ENCODE measurements at regions of chr20 and their contacts with region 1.

Region 1: GRCh38 chr20:45857114-45857881 is at the starts of genes ACOT8 and ZSWIM3:
- DNase-seq: peak; percentile 99
- H3K4me3 ChIP-seq: peak within 1 kb of the TSS; percentile 32 to 78 (median 66)
- H3K27ac ChIP-seq: peak within 1 kb of the TSS; percentile 51
- H3K4me1 ChIP-seq: peaks cover 12% of the 10 kb centered on the region
- H3K27me3 ChIP-seq: no peaks in the 10 kb centered on the region
- CTCF ChIP-seq: no peak
- POLR2A ChIP-seq: peak; percentile 91
- total RNA-seq, gene ACOT8: 15.5 and 15.8 TPM in 2 replicates
- total RNA-seq, gene ZSWIM3: 4.2 and 4.4 TPM in 2 replicates

Region 2: DNA sequence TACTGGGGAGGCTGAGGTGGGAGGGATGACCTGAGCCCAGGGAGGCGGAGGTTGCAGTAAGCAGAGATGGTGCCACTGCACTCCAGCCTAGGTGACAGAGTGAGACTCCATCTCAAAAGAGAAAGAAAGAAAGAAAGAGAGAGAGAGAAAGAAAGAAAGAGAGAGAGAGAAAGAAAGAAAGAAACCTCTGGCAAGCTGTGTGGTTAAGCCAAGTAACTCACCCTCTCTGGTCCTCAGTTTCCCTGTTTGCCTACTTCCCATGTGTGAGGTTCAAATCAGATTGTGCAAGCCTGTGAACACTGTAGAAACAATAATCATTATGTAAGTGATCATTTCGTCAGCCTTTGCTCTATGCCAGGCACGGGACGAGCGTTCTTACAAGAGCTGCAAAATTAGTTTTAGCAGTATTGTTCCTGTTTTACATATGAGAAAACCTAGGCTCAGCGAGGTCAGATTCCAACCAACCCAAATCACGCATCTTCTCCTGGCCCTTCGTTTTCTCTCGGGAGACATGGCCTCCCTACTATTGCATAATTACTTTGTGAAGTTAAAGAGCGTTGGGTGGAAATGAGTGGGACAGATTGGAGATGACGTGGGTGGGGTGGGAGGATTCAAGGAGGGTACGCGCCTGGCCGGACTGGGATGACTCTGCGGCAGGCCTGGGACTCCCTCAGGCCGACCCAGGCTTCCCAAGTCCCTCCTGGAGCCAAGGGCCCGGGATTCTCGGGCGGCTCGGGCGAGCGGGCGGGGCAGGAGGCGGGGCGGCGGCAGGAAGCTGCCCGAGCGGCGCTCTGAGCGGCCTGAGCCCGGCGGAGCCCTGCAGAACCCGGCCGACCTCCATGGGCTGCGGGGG is 24.0 kb before region 1 on chr20 and contains the start of gene SNX21:
- CTCF ChIA-PET with region 1: interaction called, 3 read pairs
- POLR2A ChIA-PET with region 1: no interaction called
- dilution Hi-C with region 1: no loop called
- intact Hi-C with region 1: loop called (anchors 1 kb)
- DNase-seq: peak; percentile 78
- H3K4me3 ChIP-seq: peak within 1 kb of the TSS; percentile 35 to 64 (median 47)
- H3K27ac ChIP-seq: peak within 1 kb of the TSS; percentile 71
- H3K4me1 ChIP-seq: peaks cover 20% of the 10 kb centered on the region
- H3K27me3 ChIP-seq: no peaks in the 10 kb centered on the region
- CTCF ChIP-seq: no peak
- POLR2A ChIP-seq: no peak
- total RNA-seq, gene SNX21: 11.9 and 14.9 TPM in 2 replicates

Region 3: GRCh38 chr20:45867819-45868176 is 10.5 kb after region 1 on chr20:
- CTCF ChIA-PET with region 1: no interaction called
- POLR2A ChIA-PET with region 1: no interaction called
- dilution Hi-C with region 1: no loop called
- intact Hi-C with region 1: no loop called
- DNase-seq: peak; percentile 17
- H3K4me3 ChIP-seq: no peak overlapping the region
- H3K27ac ChIP-seq: no peak overlapping the region
- H3K4me1 ChIP-seq: no peaks in the 10 kb centered on the region
- H3K27me3 ChIP-seq: no peaks in the 10 kb centered on the region
- CTCF ChIP-seq: no peak
- POLR2A ChIP-seq: no peak

Region 4: GRCh38 chr20:45880988-45881788 is 23.9 kb after region 1 on chr20 and contains the start of gene ZSWIM1:
- CTCF ChIA-PET with region 1: interaction called, 3 read pairs
- POLR2A ChIA-PET with region 1: interaction called, 7 read pairs
- dilution Hi-C with region 1: no loop called
- intact Hi-C with region 1: loop called (anchors 1 kb)
- DNase-seq: peak; percentile 100
- H3K4me3 ChIP-seq: peak within 1 kb of the TSS; percentile 51 to 93 (median 89)
- H3K27ac ChIP-seq: peak within 1 kb of the TSS; percentile 66
- H3K4me1 ChIP-seq: peaks cover 11% of the 10 kb centered on the region
- H3K27me3 ChIP-seq: no peaks in the 10 kb centered on the region
- CTCF ChIP-seq: no peak
- POLR2A ChIP-seq: peak; percentile 95
- total RNA-seq, gene ZSWIM1: 10.0 and 11.3 TPM in 2 replicates

Region 5: DNA sequence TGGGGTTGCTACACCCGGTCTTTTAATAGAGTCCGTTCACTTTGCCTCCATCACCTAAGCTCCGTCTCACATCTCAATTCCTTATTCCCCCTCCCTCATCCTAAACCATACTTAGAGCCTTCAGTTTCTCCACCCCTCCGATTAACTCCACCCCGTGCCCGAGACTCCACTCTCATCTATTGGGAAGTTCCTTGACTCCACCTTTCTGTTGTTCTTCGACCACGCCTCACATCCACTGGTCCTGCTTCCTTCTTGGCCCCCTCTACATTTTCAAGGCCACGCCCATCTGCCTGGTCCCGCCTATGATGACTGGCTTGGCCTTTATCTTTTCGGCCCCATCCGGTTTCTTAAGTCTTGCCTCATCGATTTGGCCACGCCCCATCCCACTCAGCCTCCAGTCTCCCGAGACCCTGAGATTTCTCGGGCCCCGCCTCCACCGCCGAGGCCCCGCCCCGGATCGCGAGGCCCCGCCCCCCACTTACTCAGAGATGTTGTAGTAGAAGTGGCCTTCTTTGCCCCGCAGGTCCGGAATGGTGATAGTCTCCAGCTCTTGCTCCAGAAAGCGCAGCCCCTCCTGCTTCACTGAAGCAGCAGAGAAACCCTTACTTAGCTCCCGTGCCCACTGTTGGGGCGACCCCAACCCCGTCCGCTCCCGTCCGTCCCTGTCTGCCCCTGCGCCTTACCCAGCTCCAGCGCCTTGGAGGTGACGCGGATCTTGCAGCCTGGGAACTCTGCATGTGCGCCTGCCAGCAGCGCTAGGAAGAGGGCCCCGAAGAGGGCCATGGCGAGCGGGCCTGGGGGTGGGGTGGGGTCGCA is 53.6 kb after region 1 on chr20:
- CTCF ChIA-PET with region 1: no interaction called
- POLR2A ChIA-PET with region 1: no interaction called
- dilution Hi-C with region 1: no loop called
- intact Hi-C with region 1: loop called (anchors 1 kb)
- DNase-seq: peak; percentile 100
- H3K4me3 ChIP-seq: peak overlapping the region; percentile 6 to 62 (median 37)
- H3K27ac ChIP-seq: peak overlapping the region; percentile 43
- H3K4me1 ChIP-seq: peaks cover 28% of the 10 kb centered on the region
- H3K27me3 ChIP-seq: no peaks in the 10 kb centered on the region
- CTCF ChIP-seq: no peak
- POLR2A ChIP-seq: peak; percentile 30

Region 6: GRCh38 chr20:45987108-45987780 is 129.9 kb after region 1 on chr20:
- CTCF ChIA-PET with region 1: no interaction called
- POLR2A ChIA-PET with region 1: no interaction called
- dilution Hi-C with region 1: no loop called
- intact Hi-C with region 1: no loop called
- DNase-seq: peak; percentile 64
- H3K4me3 ChIP-seq: no peak overlapping the region
- H3K27ac ChIP-seq: no peak overlapping the region
- H3K4me1 ChIP-seq: no peaks in the 10 kb centered on the region
- H3K27me3 ChIP-seq: peaks cover 4 to 8% of the 10 kb centered on the region in 2 experiments
- CTCF ChIP-seq: peak; percentile 83 to 94
- POLR2A ChIP-seq: no peak

Measured in endothelial cell of umbilical vein (primary cell).